Gastrocnemius medialis (tissue), 4 donors: ENCODE measurements at regions of chr2 and their contacts with region 1.

Region 1: GRCh38 chr2:53970724-53971602 is at the start of gene PSME4:
- DNase-seq: peak; percentile 91 to 93
- ATAC-seq: peak; percentile 50 to 65
- H3K4me3 ChIP-seq: peak within 1 kb of the TSS; percentile 68 to 99 (median 96)
- H3K27ac ChIP-seq: peak within 1 kb of the TSS; percentile 89 to 97 (median 96)
- H3K4me1 ChIP-seq: peaks cover 19 to 20% of the 10 kb centered on the region in 2 donors
- H3K27me3 ChIP-seq: no peaks in the 10 kb centered on the region
- CTCF ChIP-seq: peak in 1 of 5 experiments; percentile 9
- POLR2A ChIP-seq: peak; percentile 99
- total RNA-seq, gene PSME4: 144 to 247 (median 162) TPM

Region 2: GRCh38 chr2:53129851-53130250 is 841.1 kb before region 1 on chr2:
- in situ Hi-C with region 1: no loop called
- intact Hi-C with region 1: no loop called
- DNase-seq: no peak
- ATAC-seq: peak in 1 of 2 donors; percentile 41
- H3K4me3 ChIP-seq: no peak overlapping the region
- H3K27ac ChIP-seq: no peak overlapping the region
- H3K4me1 ChIP-seq: no peaks in the 10 kb centered on the region
- H3K27me3 ChIP-seq: no peaks in the 10 kb centered on the region
- CTCF ChIP-seq: no peak
- POLR2A ChIP-seq: no peak

Region 3: DNA sequence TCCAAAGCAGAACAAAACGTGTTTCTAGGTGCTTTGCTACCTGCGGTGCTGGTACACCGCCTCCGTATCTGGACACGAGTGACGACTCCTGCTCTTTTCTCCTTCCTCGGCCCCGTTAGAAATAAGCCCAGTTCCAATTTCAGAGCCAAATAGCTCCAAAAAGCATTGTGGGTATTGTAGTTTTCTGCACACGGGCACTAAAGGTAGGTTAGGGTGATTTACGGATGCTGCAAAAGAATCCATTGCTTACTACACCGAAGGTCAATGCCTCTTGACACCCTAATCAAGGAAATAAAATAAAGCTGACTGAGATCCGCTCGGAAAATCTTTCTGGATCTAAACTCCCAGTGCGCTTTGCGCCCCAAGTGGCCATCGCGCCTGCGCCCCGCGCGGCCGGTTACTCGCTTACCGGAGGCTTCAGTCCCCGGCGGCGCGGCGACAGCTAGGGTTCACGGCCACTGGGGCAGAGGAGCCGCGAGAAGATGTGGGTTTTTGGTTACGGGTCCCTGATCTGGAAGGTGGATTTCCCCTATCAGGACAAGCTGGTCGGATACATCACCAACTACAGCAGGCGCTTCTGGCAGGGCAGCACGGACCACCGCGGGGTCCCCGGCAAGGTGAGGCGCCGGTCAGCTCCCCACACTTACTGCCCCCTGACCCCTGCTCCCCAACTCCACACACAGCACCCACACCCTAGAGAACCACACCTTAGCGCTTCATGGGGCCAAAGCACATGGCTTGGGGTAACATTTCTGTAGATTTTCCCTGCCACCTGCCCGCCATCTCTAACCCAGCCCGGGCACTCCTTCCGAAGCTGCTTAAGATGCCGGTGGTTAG is 203.3 kb before region 1 on chr2 and contains the start of gene CHAC2:
- in situ Hi-C with region 1: no loop called
- intact Hi-C with region 1: loop called (anchors 5 kb)
- DNase-seq: peak; percentile 73 to 84
- ATAC-seq: peak; percentile 96 to 98
- H3K4me3 ChIP-seq: peak within 1 kb of the TSS; percentile 66 to 92 (median 71)
- H3K27ac ChIP-seq: peak within 1 kb of the TSS; percentile 82 to 89 (median 84)
- H3K4me1 ChIP-seq: peaks cover 6 to 14% of the 10 kb centered on the region in 2 donors
- H3K27me3 ChIP-seq: no peaks in the 10 kb centered on the region
- CTCF ChIP-seq: peak; percentile 23 to 69 (median 42)
- POLR2A ChIP-seq: peak; percentile 61 to 79
- total RNA-seq, gene CHAC2: 3.7 to 10.3 (median 6.0) TPM

Region 4: GRCh38 chr2:53786705-53787612 is 184.0 kb before region 1 on chr2 and contains the starts of genes ASB3 and ERLEC1:
- in situ Hi-C with region 1: no loop called
- intact Hi-C with region 1: loop called (anchors 5 kb)
- DNase-seq: peak; percentile 84
- ATAC-seq: peak; percentile 88 to 95
- H3K4me3 ChIP-seq: peak within 1 kb of the TSS; percentile 90 to 97 (median 92)
- H3K27ac ChIP-seq: peak within 1 kb of the TSS; percentile 83 to 91 (median 85)
- H3K4me1 ChIP-seq: peaks cover 31 to 40% of the 10 kb centered on the region in 2 donors
- H3K27me3 ChIP-seq: no peaks in the 10 kb centered on the region
- CTCF ChIP-seq: no peak
- POLR2A ChIP-seq: peak; percentile 62 to 71
- total RNA-seq, gene ASB3: 5.0 to 7.6 (median 6.4) TPM
- total RNA-seq, gene ERLEC1: 26.7 to 53.6 (median 28.9) TPM

Region 5: DNA sequence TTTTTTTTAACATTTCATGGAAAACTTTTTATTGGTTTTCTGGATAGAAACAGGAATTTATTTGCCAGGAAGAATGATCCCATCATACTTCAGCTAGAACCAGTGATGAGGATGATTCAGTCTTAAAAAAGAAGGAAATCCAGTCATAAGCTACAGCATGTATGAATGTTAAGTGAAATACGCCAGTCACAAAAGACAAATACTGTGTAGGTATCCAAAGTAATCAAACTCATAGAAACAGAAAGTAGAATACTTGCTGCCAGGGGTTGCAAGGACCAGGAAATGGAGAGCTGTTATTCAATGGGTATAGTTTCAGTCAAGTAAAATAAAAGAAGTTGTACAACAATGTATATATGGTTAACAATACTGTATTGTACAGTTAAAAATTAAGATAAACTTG is 21.5 kb before region 1 on chr2:
- in situ Hi-C with region 1: no loop called
- intact Hi-C with region 1: loop called (anchors 2 kb)
- DNase-seq: no peak
- ATAC-seq: no peak
- H3K4me3 ChIP-seq: no peak overlapping the region
- H3K27ac ChIP-seq: peak overlapping the region in 1 of 4 donors; percentile 88
- H3K4me1 ChIP-seq: peaks cover 21 to 39% of the 10 kb centered on the region in 2 donors
- H3K27me3 ChIP-seq: no peaks in the 10 kb centered on the region
- CTCF ChIP-seq: no peak
- POLR2A ChIP-seq: no peak

Region 6: DNA sequence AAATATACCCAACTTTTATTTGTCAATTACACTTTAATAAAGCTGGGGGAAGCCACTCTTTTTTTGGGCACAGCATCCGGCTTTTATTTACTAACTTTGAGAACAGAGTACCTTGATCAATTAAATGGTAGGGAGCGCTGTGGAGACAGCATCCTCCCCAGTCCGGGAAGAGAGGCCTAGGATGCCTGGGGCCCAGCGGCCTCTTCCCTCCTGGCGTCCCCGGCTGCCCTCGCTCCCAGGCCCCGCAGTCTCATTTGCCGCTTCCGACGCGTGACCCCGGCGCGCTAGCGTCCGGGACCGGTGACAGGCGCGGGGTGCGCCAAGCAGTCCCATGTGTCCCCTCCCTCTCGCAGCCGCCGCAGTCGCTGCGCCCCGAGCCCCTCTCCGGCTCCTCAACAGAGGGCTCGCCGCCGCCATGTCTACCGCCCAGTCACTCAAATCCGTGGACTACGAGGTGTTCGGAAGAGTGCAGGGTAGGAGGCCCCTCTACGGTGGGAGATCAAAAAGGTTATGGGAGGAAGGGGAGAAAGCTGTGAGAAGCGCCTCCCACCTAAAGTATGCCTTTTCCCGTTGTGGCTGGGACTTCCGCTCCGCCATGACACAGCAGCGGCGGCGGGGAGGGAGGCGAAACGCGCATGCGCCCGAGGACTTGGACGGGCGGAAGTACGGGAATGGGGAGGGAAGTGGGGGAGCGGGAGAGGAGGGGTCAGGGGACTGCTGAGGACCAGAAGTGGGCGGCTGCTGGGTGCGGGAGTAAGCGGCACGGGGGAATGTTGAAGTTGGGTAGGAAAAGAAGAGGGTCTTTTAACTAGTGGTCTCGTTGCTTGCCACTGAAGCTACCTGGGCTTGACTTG is 144.5 kb after region 1 on chr2 and contains the start of gene ACYP2:
- in situ Hi-C with region 1: loop called in 1 of 4 experiments (anchors 10 kb)
- intact Hi-C with region 1: loop called (anchors 2 kb)
- DNase-seq: peak; percentile 94 to 95
- ATAC-seq: peak; percentile 96 to 98
- H3K4me3 ChIP-seq: peak within 1 kb of the TSS; percentile 70 to 89 (median 76)
- H3K27ac ChIP-seq: peak within 1 kb of the TSS; percentile 97 to 99 (median 98)
- H3K4me1 ChIP-seq: peaks cover 10 to 16% of the 10 kb centered on the region in 2 donors
- H3K27me3 ChIP-seq: no peaks in the 10 kb centered on the region
- CTCF ChIP-seq: no peak
- POLR2A ChIP-seq: peak; percentile 83 to 85
- total RNA-seq, gene ACYP2: 52.9 to 121 (median 107) TPM

Region 7: DNA sequence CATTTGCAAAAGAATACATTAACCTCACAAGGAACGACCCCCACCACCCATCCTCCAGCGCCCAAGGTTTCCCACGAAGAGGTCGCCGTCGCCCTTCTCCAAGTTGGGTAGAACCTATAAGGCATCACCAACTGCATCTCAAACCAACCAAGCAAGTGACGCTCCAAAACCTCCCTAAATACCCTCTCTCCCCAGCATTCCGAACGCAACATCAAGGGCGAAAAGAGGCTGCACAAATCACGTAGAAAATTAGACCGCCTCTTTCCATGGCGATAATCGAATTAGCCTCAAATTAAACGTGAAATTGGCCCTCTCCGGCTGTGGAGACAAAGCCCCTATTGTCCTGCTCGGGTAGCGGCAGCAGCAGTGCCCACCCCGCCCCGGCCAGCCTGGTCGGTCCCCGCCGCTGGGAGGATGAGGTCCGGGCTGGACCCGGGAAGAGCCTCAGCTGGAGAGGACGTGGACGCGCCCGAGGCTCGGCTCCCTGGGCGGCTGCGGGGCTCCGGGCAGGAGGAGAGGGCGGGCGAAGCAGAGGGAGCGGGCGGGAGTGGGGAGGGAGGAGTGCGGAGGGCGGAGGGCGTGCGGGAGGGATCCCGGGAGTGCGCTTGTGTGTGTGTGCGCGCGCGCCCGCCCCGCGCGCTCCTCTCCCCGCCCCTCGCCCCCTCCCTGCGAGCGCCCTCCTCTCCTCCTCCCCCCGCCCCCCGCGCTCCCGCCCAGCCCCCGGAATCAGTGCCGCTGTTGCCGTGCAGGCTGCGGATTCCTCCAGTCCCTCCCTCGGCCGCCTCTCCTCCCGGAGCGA is 484.8 kb after region 1 on chr2 and contains the start of gene SPTBN1:
- in situ Hi-C with region 1: no loop called
- intact Hi-C with region 1: loop called (anchors 5 kb)
- DNase-seq: peak; percentile 80 to 82
- ATAC-seq: peak; percentile 63 to 69
- H3K4me3 ChIP-seq: peak within 1 kb of the TSS; percentile 68 to 86 (median 81)
- H3K27ac ChIP-seq: peak within 1 kb of the TSS; percentile 89 to 94 (median 91)
- H3K4me1 ChIP-seq: peaks cover 31 to 37% of the 10 kb centered on the region in 2 donors
- H3K27me3 ChIP-seq: no peaks in the 10 kb centered on the region
- CTCF ChIP-seq: no peak
- POLR2A ChIP-seq: peak; percentile 43 to 66
- total RNA-seq, gene SPTBN1: 107 to 191 (median 119) TPM